Body of pancreas (tissue), 4 donors: ENCODE measurements at regions of chr21 and their contacts with region 1.

Region 1: DNA sequence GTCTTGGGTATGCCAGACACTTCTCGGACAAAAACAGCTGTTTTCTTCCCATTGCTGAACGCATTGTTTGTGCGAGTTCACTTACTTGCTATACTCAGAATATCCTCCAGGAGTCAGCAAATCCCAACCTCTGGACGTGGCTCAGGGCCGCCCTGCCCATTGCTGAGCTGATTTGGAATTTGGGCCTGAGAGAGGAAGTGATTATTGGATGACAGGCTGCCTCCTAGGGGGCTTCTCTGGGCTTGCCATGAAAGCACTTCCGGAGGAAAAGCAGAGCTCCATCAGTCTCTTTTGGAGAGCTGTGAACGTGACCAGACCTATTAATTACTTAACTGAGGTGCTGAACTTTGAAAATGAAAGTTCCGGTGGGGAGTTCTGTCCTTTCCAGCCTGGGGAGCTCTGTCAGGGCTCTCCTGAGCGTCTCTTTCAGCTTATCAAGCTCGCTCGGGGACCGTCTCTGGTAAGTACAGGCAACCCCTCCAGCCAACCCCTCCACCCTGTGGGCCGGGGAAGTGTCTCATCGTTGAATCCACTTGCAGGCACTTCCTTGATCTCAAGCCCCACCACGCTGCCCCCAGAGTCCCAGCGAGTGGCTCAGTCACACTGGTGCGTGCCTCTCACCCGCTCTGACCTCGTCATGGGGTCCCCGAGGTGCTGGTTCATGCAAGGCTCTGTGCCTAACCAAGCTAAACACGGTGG is 76.9 kb downstream of the CLIC6 start:
- DNase-seq: peak; percentile 66 to 82 (median 71)
- ATAC-seq: peak; percentile 95
- H3K4me3 ChIP-seq: no peak overlapping the region
- H3K27ac ChIP-seq: peak overlapping the region; percentile 4 to 70 (median 43)
- H3K4me1 ChIP-seq: peaks cover 23% of the 10 kb centered on the region
- H3K27me3 ChIP-seq: no peaks in the 10 kb centered on the region
- CTCF ChIP-seq: peak; percentile 74 to 95 (median 89)
- POLR2A ChIP-seq: no peak

Region 2: DNA sequence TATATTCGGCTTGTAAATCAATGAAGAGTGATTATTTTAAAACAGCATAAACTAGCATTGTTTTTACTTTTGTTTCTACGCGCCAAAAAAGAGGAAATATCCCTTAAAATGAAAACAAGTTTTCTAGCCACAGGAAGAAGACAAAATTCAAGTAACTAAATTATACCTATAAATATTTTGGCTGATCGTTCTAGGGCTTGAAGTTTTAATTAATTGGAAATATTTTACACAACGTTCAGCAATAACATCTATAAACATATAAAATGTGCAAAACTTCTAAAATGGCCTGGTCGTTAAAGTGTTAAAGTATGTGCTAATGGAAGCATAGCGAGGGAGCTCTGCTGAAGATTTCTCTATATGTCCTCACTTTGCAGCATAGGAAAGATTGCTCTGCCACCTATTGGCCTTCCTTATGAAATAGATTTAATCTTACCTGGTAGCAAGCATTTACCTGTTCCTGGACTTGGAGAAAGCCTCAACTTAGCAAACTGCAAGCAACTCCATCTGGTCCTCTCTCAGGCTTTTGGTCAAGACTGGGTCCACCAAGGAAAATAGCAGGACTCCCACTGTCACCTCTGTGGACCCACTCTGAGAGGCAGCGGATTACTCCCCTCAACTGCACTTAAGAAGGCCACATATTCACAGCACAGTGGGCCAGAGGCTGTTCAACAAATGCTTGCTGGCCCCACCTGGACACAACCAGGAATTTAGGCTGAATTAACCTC is 654.7 kb after region 1 on chr21:
- intact Hi-C with region 1: loop called (anchors 10 kb)
- DNase-seq: peak; percentile 20 to 50 (median 26)
- ATAC-seq: peak; percentile 89
- H3K4me3 ChIP-seq: no peak overlapping the region
- H3K27ac ChIP-seq: no peak overlapping the region
- H3K4me1 ChIP-seq: no peaks in the 10 kb centered on the region
- H3K27me3 ChIP-seq: no peaks in the 10 kb centered on the region
- CTCF ChIP-seq: peak; percentile 26 to 86 (median 67)
- POLR2A ChIP-seq: no peak

Region 3: DNA sequence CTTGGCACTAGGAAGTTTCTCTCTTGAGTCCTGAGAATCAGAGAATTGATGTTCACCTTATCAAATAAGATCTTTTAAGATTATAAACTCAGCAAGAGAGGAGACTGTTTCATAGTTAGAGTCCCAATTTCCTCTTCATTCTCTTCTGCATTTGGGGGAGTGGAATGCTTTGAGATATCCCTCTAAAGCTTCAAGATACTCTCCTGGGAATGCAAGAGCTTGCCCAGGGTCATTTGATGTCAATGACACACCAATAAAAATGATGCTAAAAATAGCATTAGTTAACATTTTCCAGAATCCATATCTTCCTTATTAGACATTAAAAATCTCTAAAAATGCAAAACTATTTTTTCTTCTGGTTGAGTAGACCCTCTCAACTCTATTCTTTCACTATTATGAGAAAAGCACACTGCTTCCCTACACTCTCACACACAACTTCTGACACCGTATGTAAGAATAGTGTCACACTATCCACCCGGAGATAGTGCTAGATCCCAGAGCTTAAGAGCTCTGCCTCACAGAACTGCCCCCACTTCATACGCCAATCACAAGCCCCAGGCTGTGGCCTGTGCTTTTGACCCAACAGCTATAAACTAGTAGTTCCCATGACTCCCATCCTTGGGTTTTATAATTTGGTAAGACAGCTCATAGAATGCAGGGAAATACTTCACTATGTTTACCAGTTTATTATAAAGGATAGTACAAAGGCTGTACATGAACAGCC is 703.3 kb after region 1 on chr21:
- intact Hi-C with region 1: no loop called
- DNase-seq: no peak
- ATAC-seq: no peak
- H3K4me3 ChIP-seq: no peak overlapping the region
- H3K27ac ChIP-seq: no peak overlapping the region
- H3K4me1 ChIP-seq: no peaks in the 10 kb centered on the region
- H3K27me3 ChIP-seq: no peaks in the 10 kb centered on the region
- CTCF ChIP-seq: no peak
- POLR2A ChIP-seq: no peak